HCT116 (cell line): ENCODE measurements at regions of chr12 and their contacts with region 1.

Region 1: GRCh38 chr12:54958048-54958658 is 26.4 kb downstream of the TESPA1 start:
- DNase-seq: peak; percentile 53
- ATAC-seq: peak; percentile 76
- H3K4me3 ChIP-seq: no peak overlapping the region
- H3K27ac ChIP-seq: no peak overlapping the region
- H3K4me1 ChIP-seq: no peaks in the 10 kb centered on the region
- H3K27me3 ChIP-seq: peaks cover 85% of the 10 kb centered on the region
- CTCF ChIP-seq: peak; percentile 53 to 82 (median 76)
- POLR2A ChIP-seq: no peak
- RAD21 ChIP-seq: peak; percentile 93

Region 2: GRCh38 chr12:54596526-54596946 is 361.6 kb before region 1 on chr12:
- CTCF ChIA-PET with region 1: interaction called, 3 read pairs
- POLR2A ChIA-PET with region 1: no interaction called
- RAD21 ChIA-PET with region 1: no interaction called
- intact Hi-C with region 1: loop called (anchors 5 kb)
- DNase-seq: peak; percentile 57
- ATAC-seq: peak; percentile 95
- H3K4me3 ChIP-seq: no peak overlapping the region
- H3K27ac ChIP-seq: no peak overlapping the region
- H3K4me1 ChIP-seq: no peaks in the 10 kb centered on the region
- H3K27me3 ChIP-seq: no peaks in the 10 kb centered on the region; the same call in 1 of the 2 replicates
- CTCF ChIP-seq: peak; percentile 69 to 91 (median 90)
- POLR2A ChIP-seq: no peak
- RAD21 ChIP-seq: peak; percentile 69

Region 3: DNA sequence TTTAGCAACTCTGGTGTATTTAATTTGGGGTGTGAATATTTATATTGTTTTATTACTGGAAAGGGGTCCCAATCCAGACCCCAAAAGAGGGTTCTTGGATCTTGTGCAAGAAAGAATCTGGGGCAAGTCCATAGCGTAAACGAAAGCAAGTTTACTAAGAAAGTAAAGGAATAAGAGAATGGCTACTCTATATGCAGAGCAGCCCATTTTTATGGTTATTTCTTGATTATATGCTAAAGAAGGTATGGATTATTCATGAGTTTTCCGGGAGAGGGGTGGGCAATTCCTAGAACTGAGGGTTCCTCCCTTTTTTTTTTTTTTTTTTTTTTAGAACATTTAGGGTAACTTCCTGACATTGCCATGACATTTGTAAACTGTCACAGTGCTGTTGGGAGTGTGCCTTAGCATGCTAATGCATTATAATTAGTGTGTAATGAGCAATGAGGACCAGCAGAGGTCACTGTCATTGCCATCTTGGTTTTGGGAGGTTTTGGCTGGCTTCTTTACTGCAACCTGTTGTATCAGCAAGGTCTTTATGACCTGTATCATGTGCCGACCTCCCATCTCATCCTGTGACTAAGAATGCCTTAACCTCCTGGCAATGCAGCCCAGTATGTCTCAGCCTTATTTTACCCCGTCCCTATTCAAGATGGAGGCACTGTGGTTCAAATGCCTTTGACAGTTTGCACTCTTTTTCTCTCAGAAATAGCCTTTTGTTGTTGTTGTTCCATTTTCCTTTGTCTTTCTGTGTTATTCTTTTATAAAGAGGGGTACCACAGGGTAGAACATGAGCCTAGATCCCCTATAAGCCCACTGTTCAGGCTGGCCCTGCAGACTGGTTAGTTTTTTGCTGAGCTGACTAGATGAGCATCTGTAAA is 234.5 kb before region 1 on chr12:
- CTCF ChIA-PET with region 1: interaction called, 12 read pairs
- POLR2A ChIA-PET with region 1: no interaction called
- RAD21 ChIA-PET with region 1: no interaction called
- intact Hi-C with region 1: no loop called
- DNase-seq: peak; percentile 13
- ATAC-seq: peak; percentile 74
- H3K4me3 ChIP-seq: no peak overlapping the region
- H3K27ac ChIP-seq: no peak overlapping the region
- H3K4me1 ChIP-seq: no peaks in the 10 kb centered on the region
- H3K27me3 ChIP-seq: peaks cover 43% of the 10 kb centered on the region
- CTCF ChIP-seq: peak; percentile 7 to 66 (median 62); a peak in 4 of 6 replicates
- POLR2A ChIP-seq: no peak
- RAD21 ChIP-seq: no peak

Region 4: GRCh38 chr12:54853995-54854566 is 104.1 kb before region 1 on chr12 and contains the start of gene MUCL1:
- CTCF ChIA-PET with region 1: interaction called, 16 read pairs
- POLR2A ChIA-PET with region 1: no interaction called
- RAD21 ChIA-PET with region 1: no interaction called
- intact Hi-C with region 1: loop called (anchors 1 kb)
- DNase-seq: peak; percentile 62
- ATAC-seq: peak; percentile 100
- H3K4me3 ChIP-seq: no peak within 1 kb of the TSS
- H3K27ac ChIP-seq: no peak within 1 kb of the TSS
- H3K4me1 ChIP-seq: no peaks in the 10 kb centered on the region
- H3K27me3 ChIP-seq: peaks cover 30% of the 10 kb centered on the region
- CTCF ChIP-seq: peak; percentile 77 to 92 (median 84); a peak in 5 of 6 replicates
- POLR2A ChIP-seq: no peak
- RAD21 ChIP-seq: peak; percentile 87
- total RNA-seq, gene MUCL1: not detected

Region 5: GRCh38 chr12:55073043-55074022 is 115.2 kb after region 1 on chr12:
- CTCF ChIA-PET with region 1: interaction called, 11 read pairs
- POLR2A ChIA-PET with region 1: no interaction called
- RAD21 ChIA-PET with region 1: no interaction called
- intact Hi-C with region 1: no loop called
- DNase-seq: peak; percentile 66
- ATAC-seq: 0 out of 2 replicates have a peak, but pooled peaks have one; percentile 35
- H3K4me3 ChIP-seq: no peak overlapping the region
- H3K27ac ChIP-seq: no peak overlapping the region
- H3K4me1 ChIP-seq: no peaks in the 10 kb centered on the region
- H3K27me3 ChIP-seq: peaks cover 17% of the 10 kb centered on the region
- CTCF ChIP-seq: peak; percentile 71 to 87 (median 79)
- POLR2A ChIP-seq: no peak
- RAD21 ChIP-seq: peak; percentile 84